Left ventricle myocardium inferior (tissue), 1 donor: ENCODE measurements at regions of chr1 and their contacts with region 1.

Region 1: GRCh38 chr1:180070286-180070685 is 84.4 kb upstream of the QSOX1 start:
- DNase-seq: no peak
- H3K4me3 ChIP-seq: no peak overlapping the region
- H3K27ac ChIP-seq: no peak overlapping the region
- H3K4me1 ChIP-seq: no peaks in the 10 kb centered on the region
- H3K27me3 ChIP-seq: no peaks in the 10 kb centered on the region
- CTCF ChIP-seq: no peak

Region 2: GRCh38 chr1:179814546-179814838 is 255.8 kb before region 1 on chr1:
- intact Hi-C with region 1: no loop called
- DNase-seq: peak; percentile 66
- H3K4me3 ChIP-seq: peak overlapping the region; percentile 60
- H3K27ac ChIP-seq: peak overlapping the region; percentile 75
- H3K4me1 ChIP-seq: peaks cover 38% of the 10 kb centered on the region
- H3K27me3 ChIP-seq: peaks cover 36% of the 10 kb centered on the region
- CTCF ChIP-seq: no peak

Region 3: GRCh38 chr1:180027949-180028445 is 42.3 kb before region 1 on chr1:
- intact Hi-C with region 1: loop called (anchors 10 kb)
- DNase-seq: no peak
- H3K4me3 ChIP-seq: no peak overlapping the region
- H3K27ac ChIP-seq: no peak overlapping the region
- H3K4me1 ChIP-seq: no peaks in the 10 kb centered on the region
- H3K27me3 ChIP-seq: no peaks in the 10 kb centered on the region
- CTCF ChIP-seq: no peak